Activated CD8-positive, alpha-beta T cell treated with anti-CD3 and anti-CD28 coated beads for 36 hours (primary cell): ENCODE measurements at regions of chr19 and their contacts with region 1.

Region 1: GRCh38 chr19:17847538-17848366 is at the start of gene JAK3:
- DNase-seq: peak; percentile 96
- ATAC-seq: peak; percentile 85
- H3K4me3 Mint-ChIP-seq: peak within 1 kb of the TSS; percentile 85
- H3K27ac Mint-ChIP-seq: peak within 1 kb of the TSS; percentile 93
- H3K4me1 Mint-ChIP-seq: peaks cover 61% of the 10 kb centered on the region
- H3K27me3 Mint-ChIP-seq: no peaks in the 10 kb centered on the region
- CTCF ChIP-seq: no peak
- total RNA-seq, gene JAK3: 120 to 126 TPM

Region 2: GRCh38 chr19:17751103-17751911 is 96.4 kb before region 1 on chr19 and contains the start of gene FCHO1:
- CTCF ChIA-PET with region 1: interaction called, 3 read pairs
- POLR2A ChIA-PET with region 1: interaction called, 14 read pairs
- intact Hi-C with region 1: no loop called
- DNase-seq: peak; percentile 95
- ATAC-seq: peak; percentile 68
- H3K4me3 Mint-ChIP-seq: peak within 1 kb of the TSS; percentile 80
- H3K27ac Mint-ChIP-seq: peak within 1 kb of the TSS; percentile 92
- H3K4me1 Mint-ChIP-seq: peaks cover 58% of the 10 kb centered on the region
- H3K27me3 Mint-ChIP-seq: no peaks in the 10 kb centered on the region
- CTCF ChIP-seq: no peak
- total RNA-seq, gene FCHO1: 36.9 to 38.3 TPM

Region 3: DNA sequence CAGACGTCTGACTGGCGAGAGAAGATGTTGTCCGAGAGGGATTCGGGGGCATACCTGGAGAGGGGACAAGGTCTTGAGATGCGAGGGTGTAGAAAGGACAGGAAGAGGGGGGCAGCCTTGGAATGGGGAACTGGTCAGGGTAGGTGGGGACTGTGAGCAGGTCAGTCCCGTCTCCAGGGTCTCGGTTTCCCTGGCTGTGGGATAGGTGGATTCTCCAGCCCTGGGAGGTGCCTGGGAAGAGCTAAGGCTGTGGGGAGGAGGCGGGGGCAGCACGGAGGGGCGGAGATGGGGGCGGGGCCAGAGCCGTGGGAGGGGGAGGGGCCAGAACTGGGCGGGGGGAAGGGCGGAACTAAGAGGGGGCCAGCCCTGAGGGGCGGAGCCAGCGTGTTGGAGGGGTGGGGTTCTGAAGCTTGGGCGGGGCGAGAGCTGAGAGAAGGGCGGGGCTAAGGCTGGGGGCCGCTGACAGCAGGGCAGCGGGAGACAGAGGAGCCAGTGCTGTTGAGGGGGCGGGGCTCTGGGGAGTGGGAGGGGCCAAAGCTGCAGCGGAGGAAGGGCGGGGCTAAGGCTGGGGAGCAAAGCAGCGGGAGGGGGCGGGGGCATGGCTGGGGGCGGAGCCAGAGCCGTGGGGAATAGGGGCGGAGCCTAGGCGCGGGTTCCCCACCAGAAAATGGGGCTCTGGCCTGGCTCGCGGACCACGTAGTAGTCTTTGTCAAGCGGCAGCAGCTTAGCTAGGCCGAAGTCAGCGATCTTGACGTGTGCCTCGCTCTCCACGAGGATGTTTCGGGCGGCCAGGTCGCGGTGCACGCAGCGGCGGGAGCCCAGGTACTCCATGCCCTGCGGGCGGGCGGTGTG is 17.0 kb before region 1 on chr19:
- CTCF ChIA-PET with region 1: interaction called, 3 read pairs
- POLR2A ChIA-PET with region 1: interaction called, 19 read pairs
- intact Hi-C with region 1: no loop called
- DNase-seq: peak; percentile 76
- ATAC-seq: peak; percentile 94
- H3K4me3 Mint-ChIP-seq: no peak overlapping the region
- H3K27ac Mint-ChIP-seq: no peak overlapping the region
- H3K4me1 Mint-ChIP-seq: peaks cover 9% of the 10 kb centered on the region
- H3K27me3 Mint-ChIP-seq: no peaks in the 10 kb centered on the region
- CTCF ChIP-seq: no peak

Region 4: DNA sequence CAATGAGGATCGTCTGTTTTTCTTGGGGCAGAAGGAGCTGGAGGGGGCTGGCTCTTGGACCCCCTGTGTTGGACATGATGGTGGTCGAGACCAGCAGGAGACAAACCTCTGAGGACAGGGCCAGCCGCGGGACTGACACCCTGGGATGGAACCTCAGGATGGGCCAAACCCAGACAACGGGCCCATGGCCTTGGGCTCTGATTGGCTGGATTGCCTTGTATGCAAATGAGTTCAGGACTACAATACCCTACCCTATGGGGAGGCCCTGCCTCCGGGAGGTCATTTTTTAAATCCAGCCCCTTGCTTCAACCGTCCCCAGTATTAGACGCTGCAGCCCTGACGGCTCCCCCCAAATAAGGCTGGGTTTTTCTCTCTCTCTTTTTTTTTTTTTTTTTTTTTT is 46.0 kb after region 1 on chr19:
- CTCF ChIA-PET with region 1: no interaction called
- POLR2A ChIA-PET with region 1: no interaction called
- intact Hi-C with region 1: no loop called
- DNase-seq: no peak
- ATAC-seq: no peak
- H3K4me3 Mint-ChIP-seq: no peak overlapping the region
- H3K27ac Mint-ChIP-seq: no peak overlapping the region
- H3K4me1 Mint-ChIP-seq: no peaks in the 10 kb centered on the region
- H3K27me3 Mint-ChIP-seq: peaks cover under 1% of the 10 kb centered on the region
- CTCF ChIP-seq: no peak

Region 5: DNA sequence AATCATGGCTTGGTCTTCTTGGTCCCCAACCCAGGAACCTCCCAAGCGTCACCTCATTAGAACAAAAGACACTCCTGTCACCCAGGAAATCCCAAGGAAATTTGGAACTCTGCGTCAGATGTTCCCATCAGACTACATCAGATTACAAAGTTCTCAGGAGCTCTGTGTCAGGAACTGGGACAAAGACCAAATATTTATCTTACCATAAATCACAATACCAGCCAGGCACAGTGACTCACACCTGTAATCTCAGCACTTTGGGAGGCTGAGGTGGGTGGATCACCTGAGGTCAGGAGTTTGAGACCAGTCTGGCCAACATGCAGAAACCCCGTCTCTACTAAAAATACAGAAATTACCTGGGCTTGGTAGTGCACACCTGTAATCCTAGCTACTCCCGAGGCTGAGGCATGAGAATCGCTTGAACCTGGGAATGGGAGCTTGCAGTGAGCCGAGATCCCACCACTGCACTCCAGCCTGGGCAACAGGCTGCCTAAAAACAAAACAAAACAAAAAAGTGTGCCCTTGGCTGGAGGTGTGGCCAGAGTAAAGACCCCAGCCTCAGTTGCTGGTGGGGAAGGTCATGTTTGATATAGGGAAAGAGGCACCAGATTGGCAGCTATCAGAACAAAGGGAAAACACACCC is 68.3 kb after region 1 on chr19:
- CTCF ChIA-PET with region 1: no interaction called
- POLR2A ChIA-PET with region 1: no interaction called
- intact Hi-C with region 1: no loop called
- DNase-seq: no peak
- ATAC-seq: no peak
- H3K4me3 Mint-ChIP-seq: no peak overlapping the region
- H3K27ac Mint-ChIP-seq: no peak overlapping the region
- H3K4me1 Mint-ChIP-seq: no peaks in the 10 kb centered on the region
- H3K27me3 Mint-ChIP-seq: peaks cover 2% of the 10 kb centered on the region
- CTCF ChIP-seq: no peak